ENCODE measurements at regions of chr4 and their contacts with region 1.

Region 1: DNA sequence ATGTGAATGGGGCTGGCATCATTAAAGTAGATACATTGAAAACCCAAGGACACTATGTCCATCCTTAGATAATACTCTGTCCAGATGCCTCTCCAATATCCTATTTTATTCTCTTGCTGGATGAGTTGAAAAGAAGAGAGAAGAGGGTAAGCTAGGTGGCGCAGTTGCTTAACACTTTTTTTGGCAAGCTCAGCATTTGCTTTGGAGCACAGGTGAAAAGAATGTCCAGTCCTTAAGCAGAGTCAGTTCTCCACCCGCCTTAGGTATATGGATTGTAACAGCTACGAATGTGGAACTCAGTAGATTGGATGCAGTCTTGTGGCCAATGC is 208.4 kb downstream of the NWD2 start:
- DNase-seq: peak; percentile 50
- ATAC-seq: peak; percentile 82
- H3K4me3 ChIP-seq: peak overlapping the region in 1 of 2 experiments; percentile 60; a peak in 2 of 4 replicates
- H3K27ac ChIP-seq: no peak overlapping the region
- H3K4me1 ChIP-seq: no peaks in the 10 kb centered on the region
- H3K27me3 ChIP-seq: peaks cover 13% of the 10 kb centered on the region
- CTCF ChIP-seq: peak; percentile 69

Region 2: DNA sequence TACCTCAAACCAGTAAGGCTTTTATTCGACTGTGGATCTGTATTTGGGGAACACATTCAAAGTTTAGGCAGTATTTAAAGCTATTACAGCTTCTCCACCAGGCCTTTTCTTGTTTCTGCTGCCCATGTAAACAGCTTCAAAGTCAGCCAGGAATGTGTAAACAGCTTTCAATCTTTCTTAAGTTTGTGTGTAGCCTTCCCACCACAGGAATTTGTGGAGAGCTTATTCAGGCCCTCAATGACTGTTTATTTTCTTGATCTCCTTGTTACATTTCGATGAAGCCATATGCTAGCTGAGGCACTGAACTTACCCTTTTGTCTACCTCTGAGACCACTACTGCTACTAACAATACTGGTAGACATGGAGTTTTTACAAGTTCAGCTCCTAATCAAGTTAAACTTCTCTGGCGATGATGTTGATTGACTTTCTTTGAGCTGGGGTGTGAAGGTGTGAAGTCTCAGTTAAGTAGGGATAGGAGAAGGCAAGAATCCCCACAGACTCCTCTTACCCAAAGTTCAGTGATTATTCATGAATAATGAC is 135.7 kb before region 1 on chr4:
- CTCF ChIA-PET with region 1: no interaction called
- POLR2A ChIA-PET with region 1: no interaction called
- in situ Hi-C with region 1: no loop called
- intact Hi-C with region 1: no loop called
- DNase-seq: no peak
- ATAC-seq: no peak
- H3K4me3 ChIP-seq: no peak overlapping the region
- H3K27ac ChIP-seq: no peak overlapping the region
- H3K4me1 ChIP-seq: no peaks in the 10 kb centered on the region
- H3K27me3 ChIP-seq: no peaks in the 10 kb centered on the region
- CTCF ChIP-seq: no peak

Region 3: GRCh38 chr4:37338983-37339382 is 113.9 kb before region 1 on chr4:
- CTCF ChIA-PET with region 1: no interaction called
- POLR2A ChIA-PET with region 1: no interaction called
- in situ Hi-C with region 1: no loop called
- intact Hi-C with region 1: no loop called
- DNase-seq: no peak
- ATAC-seq: no peak
- H3K4me3 ChIP-seq: no peak overlapping the region
- H3K27ac ChIP-seq: no peak overlapping the region
- H3K4me1 ChIP-seq: no peaks in the 10 kb centered on the region
- H3K27me3 ChIP-seq: no peaks in the 10 kb centered on the region
- CTCF ChIP-seq: no peak

Region 4: GRCh38 chr4:37471971-37472370 is 19.1 kb after region 1 on chr4:
- CTCF ChIA-PET with region 1: no interaction called
- POLR2A ChIA-PET with region 1: no interaction called
- in situ Hi-C with region 1: no loop called
- intact Hi-C with region 1: no loop called
- DNase-seq: no peak
- ATAC-seq: no peak
- H3K4me3 ChIP-seq: no peak overlapping the region
- H3K27ac ChIP-seq: no peak overlapping the region
- H3K4me1 ChIP-seq: no peaks in the 10 kb centered on the region
- H3K27me3 ChIP-seq: 0 out of 2 replicates have a peak, but pooled peaks cover 2% of the 10 kb centered on the region
- CTCF ChIP-seq: no peak

Region 5: DNA sequence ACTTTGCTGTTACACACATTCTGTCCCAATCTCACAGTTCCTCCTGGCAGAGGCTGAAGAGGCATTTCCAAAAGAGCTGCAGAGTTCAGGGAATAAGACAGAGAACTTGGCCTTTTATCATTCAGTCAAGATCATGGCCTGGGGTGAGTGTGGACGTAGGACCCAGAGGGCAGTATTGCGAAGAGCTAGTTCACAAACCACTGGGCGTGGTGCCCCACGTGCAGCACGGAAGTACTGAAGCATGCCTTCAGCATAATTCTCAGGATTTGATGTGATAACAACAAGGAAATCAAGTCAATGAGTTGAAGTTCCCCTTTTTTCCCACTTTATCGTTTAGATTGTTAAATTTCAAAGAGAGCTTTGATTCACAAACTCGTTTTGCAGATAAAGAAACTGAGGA is 115.6 kb after region 1 on chr4:
- CTCF ChIA-PET with region 1: interaction called, 5 read pairs
- POLR2A ChIA-PET with region 1: no interaction called
- in situ Hi-C with region 1: no loop called
- intact Hi-C with region 1: loop called (anchors 1 kb)
- DNase-seq: no peak
- ATAC-seq: no peak
- H3K4me3 ChIP-seq: no peak overlapping the region
- H3K27ac ChIP-seq: no peak overlapping the region
- H3K4me1 ChIP-seq: no peaks in the 10 kb centered on the region
- H3K27me3 ChIP-seq: no peaks in the 10 kb centered on the region
- CTCF ChIP-seq: no peak

Region 6: GRCh38 chr4:37905531-37906169 is 452.7 kb after region 1 on chr4:
- CTCF ChIA-PET with region 1: no interaction called
- POLR2A ChIA-PET with region 1: no interaction called
- in situ Hi-C with region 1: no loop called
- intact Hi-C with region 1: no loop called
- DNase-seq: no peak
- ATAC-seq: no peak
- H3K4me3 ChIP-seq: no peak overlapping the region
- H3K27ac ChIP-seq: no peak overlapping the region
- H3K4me1 ChIP-seq: no peaks in the 10 kb centered on the region
- H3K27me3 ChIP-seq: peaks cover 4% of the 10 kb centered on the region
- CTCF ChIP-seq: no peak

Region 7: DNA sequence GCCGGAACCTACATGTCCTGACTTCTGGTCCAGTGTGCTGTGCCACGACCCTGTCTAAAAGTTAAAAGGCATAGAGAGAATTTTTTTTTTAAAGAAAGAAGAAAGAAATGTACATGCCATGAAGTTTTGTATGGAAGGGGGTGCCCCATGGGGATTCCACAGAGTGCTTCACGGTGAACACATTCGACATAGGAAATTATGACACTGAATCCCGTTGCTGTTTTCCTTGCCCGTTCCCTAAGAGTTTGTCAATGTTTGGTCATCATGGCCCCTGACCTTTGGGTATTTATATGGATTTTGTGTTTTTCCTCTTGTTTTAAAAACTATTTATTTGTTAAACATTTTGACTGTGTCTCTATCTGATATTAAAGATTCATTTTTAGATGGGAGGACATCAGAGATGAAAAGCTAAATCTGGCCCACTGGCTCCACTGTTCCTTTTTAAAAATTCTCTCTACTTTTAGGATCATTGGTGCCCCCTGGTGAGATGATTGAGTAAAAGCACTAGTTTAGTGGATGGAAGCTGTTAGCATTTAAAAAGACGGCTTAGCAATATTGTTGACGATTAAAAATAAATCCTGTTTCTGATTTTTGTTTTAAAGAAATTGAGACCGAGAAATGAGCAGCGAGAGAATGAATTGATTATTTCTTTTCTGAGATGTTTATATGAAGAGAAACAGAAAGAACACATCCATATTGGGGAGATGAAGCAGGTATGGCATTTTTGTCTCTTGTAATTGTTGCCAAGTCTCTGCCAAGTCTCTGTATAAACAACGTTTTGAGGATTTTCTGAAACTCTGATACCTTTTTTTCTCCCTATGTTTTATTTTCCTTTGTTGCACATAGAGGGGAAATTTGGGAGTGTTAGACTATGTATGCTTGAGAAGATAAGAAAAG is 582.3 kb after region 1 on chr4:
- CTCF ChIA-PET with region 1: no interaction called
- POLR2A ChIA-PET with region 1: no interaction called
- in situ Hi-C with region 1: no loop called
- intact Hi-C with region 1: loop called (anchors 10 kb)
- DNase-seq: peak; percentile 13
- ATAC-seq: no peak
- H3K4me3 ChIP-seq: no peak overlapping the region
- H3K27ac ChIP-seq: no peak overlapping the region
- H3K4me1 ChIP-seq: no peaks in the 10 kb centered on the region
- H3K27me3 ChIP-seq: no peaks in the 10 kb centered on the region
- CTCF ChIP-seq: peak; percentile 63; the same call in 1 of the 2 replicates